Naive thymus-derived CD8-positive, alpha-beta T cell (primary cell): ENCODE measurements at regions of chr5 and their contacts with region 1.

Region 1: GRCh38 chr5:173917788-173918786 is 29.9 kb downstream of the CPEB4 start:
- DNase-seq: peak; percentile 28 to 86 (median 58)
- ATAC-seq: peak; percentile 92
- H3K4me3 Mint-ChIP-seq: no peak overlapping the region
- H3K27ac Mint-ChIP-seq: no peak overlapping the region
- H3K4me1 Mint-ChIP-seq: peaks cover 0 to 27% (median 18%) of the 10 kb centered on the region in 4 donors
- H3K27me3 Mint-ChIP-seq: no peaks in the 10 kb centered on the region

Region 2: DNA sequence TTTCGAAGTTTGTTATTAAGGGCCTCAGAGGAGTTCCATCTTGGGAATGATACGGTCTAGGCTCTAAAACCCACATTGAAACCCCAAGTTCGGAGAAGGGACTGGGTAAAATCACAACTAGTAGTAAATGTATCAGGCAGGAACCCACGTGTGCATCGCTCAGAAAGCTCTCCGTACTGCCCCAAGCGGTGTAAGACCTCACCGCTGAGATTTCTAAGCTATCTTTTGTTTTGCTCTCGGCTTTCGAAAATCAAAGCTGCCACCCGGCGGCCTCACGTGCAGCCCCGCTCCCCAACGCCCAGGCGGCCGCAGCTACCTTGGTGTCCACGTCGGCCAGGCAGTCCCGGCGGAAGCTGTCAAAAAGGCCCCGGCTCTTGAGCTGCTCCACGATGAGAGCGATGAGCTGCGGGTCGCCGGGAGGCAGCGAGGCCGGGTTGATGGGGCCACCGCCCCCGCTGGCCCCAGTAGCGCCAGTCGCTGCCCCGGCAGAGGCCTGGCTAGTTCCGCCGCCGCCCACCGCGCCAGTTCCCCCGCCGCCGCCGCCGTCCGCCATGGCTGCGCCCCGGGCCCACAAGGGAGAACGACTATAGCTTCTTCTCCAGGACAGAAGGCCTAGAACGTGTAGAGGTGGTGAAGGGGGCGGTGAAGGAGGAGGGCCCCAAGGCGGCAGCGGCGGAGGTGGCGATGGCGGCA is 302.1 kb before region 1 on chr5:
- POLR2A ChIA-PET with region 1: interaction called, 27 read pairs
- DNase-seq: peak; percentile 51 to 83 (median 68)
- ATAC-seq: peak; percentile 70 to 72
- H3K4me3 Mint-ChIP-seq: peak overlapping the region; percentile 86 to 97 (median 92)
- H3K27ac Mint-ChIP-seq: peak overlapping the region; percentile 57 to 99 (median 97)
- H3K4me1 Mint-ChIP-seq: peaks cover 22 to 54% (median 52%) of the 10 kb centered on the region in 4 donors
- H3K27me3 Mint-ChIP-seq: no peaks in the 10 kb centered on the region

Region 3: DNA sequence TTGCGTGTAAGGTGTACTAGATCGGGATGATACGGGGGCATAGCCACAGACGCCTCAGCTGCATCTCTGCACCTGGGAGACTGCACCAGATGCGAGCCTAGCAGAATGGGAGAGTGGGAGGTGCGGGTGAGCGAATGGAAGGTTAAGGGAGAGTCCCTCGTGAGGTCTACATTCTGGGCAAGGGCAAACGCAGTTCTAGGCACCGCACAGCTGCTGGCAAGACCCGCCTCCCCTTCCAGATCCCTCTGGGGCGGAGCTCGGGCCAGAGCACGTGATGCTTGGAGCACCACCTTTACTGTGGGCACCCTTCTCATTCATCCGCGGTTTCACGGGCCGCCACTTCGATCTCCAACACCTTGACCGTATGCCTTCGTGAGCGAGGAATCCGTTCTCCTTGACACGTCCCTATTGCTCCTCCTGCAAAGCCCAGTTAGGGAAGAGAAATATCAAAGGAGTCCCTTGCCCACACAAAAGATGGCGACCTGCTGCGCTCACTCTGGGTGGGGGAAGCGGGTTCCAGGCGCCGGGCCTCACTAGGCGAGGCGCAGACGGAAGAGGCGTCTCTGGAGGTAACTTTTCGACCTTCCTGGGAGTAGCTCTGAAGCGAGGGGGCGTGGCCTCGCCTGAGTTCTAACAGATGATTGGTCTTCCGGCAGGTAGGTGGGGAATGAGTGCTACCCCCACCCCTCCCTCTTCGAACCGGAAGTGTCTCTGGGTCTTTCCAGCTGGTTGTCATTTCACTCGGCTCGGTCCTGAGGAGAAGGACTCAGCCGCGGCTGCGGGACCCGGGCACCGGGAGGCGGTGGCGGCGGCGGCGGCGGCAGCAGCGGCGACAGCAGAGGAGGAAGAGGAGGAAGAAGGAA is 30.2 kb before region 1 on chr5 and contains the start of gene CPEB4:
- POLR2A ChIA-PET with region 1: interaction called, 75 read pairs
- DNase-seq: peak; percentile 90 to 99 (median 97)
- ATAC-seq: peak; percentile 94 to 96
- H3K4me3 Mint-ChIP-seq: peak within 1 kb of the TSS; percentile 91 to 100 (median 98)
- H3K27ac Mint-ChIP-seq: peak within 1 kb of the TSS; percentile 92 to 100 (median 98)
- H3K4me1 Mint-ChIP-seq: peaks cover 44 to 86% (median 78%) of the 10 kb centered on the region in 4 donors
- H3K27me3 Mint-ChIP-seq: no peaks in the 10 kb centered on the region
- polyA plus RNA-seq, gene CPEB4: 1.2 to 4.4 (median 2.8) TPM

Region 4: GRCh38 chr5:173895401-173896165 is 22.5 kb before region 1 on chr5:
- POLR2A ChIA-PET with region 1: interaction called, 75 read pairs
- DNase-seq: no peak
- ATAC-seq: no peak
- H3K4me3 Mint-ChIP-seq: no peak overlapping the region
- H3K27ac Mint-ChIP-seq: no peak overlapping the region
- H3K4me1 Mint-ChIP-seq: peaks cover 14 to 56% (median 47%) of the 10 kb centered on the region in 4 donors
- H3K27me3 Mint-ChIP-seq: no peaks in the 10 kb centered on the region

Region 5: DNA sequence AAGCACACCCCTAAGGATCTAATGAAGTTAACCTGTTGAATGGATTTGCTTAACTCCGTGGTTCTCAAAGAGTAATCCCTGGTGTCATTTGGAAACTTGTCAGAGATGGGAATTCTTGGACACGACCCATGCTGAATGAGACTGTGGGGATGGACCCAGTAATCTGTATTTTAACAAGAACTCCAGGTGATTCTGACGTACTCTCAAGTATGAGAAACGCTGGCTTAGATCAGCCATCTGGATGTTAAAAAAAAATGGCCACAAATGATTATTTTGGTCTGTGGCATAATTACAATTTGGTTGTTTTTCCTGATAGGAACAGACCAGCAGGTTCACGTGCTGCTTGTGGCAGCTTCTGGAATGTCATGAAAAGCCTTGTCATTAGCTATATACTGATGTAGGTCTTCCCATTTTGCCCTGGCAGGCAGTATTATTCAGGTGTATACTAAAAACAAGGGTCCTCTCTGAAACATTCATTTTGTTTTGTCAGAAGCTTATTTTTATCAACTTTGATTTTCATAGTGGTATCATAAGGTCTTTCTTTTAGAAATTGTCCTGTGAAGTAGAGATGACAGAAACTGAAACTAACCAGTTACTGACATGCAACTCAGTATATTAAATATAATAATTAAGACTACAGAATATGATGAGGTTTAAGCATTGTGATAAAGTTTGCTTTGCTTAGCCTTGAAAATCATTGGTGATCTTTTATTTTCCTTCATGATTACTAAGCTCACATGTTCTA is 14.5 kb before region 1 on chr5:
- POLR2A ChIA-PET with region 1: interaction called, 13 read pairs
- DNase-seq: no peak
- ATAC-seq: no peak
- H3K4me3 Mint-ChIP-seq: no peak overlapping the region
- H3K27ac Mint-ChIP-seq: peak overlapping the region in 1 of 10 donors; percentile 5
- H3K4me1 Mint-ChIP-seq: peaks cover 7 to 59% (median 31%) of the 10 kb centered on the region in 4 donors
- H3K27me3 Mint-ChIP-seq: no peaks in the 10 kb centered on the region

Region 6: DNA sequence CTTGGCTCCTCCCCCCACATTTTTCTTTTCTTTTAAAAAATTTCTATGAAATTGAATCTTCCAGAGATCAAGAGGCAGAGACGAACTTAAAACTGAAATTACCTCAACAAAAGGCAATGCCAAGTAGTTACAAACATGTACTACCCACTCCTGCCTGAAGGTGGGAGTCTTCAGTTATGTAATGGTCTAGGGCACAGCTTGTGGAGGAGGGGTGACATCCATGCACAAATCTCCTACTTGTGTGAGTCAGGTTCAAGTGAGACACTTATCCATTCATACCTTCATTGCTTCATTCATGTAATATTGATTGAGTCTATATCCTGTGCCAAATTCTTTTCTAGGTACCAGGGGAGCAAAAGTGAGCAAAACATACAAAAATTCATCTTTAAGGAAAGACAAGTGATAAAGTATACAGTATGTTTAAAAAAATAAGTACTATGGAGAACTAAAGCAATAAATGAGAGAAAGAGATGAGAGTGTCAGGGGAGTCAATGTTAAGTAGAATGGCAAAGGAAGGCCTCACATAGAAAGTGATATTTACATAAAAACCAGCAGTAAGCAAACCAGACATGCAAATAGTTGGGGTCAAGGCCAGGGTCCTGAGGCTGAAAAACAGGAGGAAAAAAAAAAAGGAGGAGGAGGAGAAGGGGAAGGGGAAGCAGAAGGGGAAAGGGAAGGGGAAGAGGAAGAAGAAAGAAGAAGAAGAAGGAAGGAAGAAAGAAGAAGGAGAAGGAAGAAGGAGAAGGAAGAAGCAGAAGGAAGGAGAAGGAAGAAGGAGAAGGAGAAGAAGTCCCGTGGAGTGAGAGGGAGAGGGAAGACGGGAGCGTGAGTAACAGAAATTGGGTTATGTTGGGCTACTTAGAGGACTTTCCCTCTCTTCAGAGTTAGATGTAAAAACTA is 102.6 kb after region 1 on chr5:
- POLR2A ChIA-PET with region 1: no interaction called
- DNase-seq: no peak
- ATAC-seq: no peak
- H3K4me3 Mint-ChIP-seq: no peak overlapping the region
- H3K27ac Mint-ChIP-seq: peak overlapping the region in 1 of 10 donors; percentile 73
- H3K4me1 Mint-ChIP-seq: peaks cover 0 to 2% (median 0%) of the 10 kb centered on the region in 4 donors
- H3K27me3 Mint-ChIP-seq: peaks cover 25 to 47% (median 34%) of the 10 kb centered on the region in 5 donors